IMR-90 (cell line): ENCODE measurements at regions of chr19 and their contacts with region 1.

Region 1: DNA sequence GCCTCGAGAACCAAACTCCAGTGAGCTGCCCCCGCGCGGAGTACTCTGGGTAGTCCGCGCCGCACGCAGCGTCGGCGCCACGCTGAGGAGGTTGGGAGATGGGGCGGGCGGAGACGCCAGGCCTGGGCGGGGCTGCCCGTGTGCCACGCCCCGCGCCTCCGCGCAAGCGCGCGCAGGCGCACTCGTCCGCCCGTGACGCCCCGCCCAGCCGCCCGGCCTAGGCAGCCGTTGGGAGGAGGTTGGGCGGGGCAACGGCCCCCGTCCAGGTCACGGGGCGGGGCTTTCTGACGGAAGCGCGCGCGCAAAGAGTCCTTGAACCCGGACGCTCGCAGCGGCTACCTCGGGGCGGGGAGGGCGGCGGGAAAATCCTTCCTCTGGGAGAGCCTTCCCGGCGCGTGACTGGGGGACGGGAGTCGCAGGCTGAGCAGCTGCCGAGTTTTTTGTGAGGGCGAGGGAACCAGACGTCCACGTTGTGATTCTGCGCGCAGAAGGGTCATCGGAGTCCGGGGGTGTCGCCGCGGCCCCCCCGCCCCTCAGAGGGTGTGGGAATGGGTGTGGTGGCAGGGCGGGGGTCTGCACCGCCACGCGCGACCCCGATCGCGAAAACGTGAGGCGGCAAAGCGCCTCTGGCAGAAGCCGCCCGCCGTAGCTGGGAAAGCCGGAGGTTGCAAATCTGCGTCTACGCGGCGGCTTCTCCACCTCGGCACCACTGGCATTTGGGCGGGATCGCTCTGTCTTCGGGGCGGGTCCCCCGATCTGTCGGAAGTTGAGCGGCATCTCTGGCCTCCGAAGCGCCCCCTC is at the start of gene MED26:
- DNase-seq: peak; percentile 90
- ATAC-seq: peak; percentile 91
- H3K4me3 ChIP-seq: peak within 1 kb of the TSS; percentile 95
- H3K27ac ChIP-seq: peak within 1 kb of the TSS; percentile 90
- H3K4me1 ChIP-seq: 0 out of 2 replicates have a peak, but pooled peaks cover 2% of the 10 kb centered on the region
- H3K27me3 ChIP-seq: no peaks in the 10 kb centered on the region
- CTCF ChIP-seq: no peak
- POLR2A ChIP-seq: peak; percentile 94
- RAD21 ChIP-seq: peak; percentile 28; the same call in 1 of the 2 replicates
- total RNA-seq, gene MED26: 2.0 and 2.8 TPM in 2 replicates

Region 2: GRCh38 chr19:16324384-16325160 is 303.8 kb before region 1 on chr19 and contains the start of gene KLF2:
- CTCF ChIA-PET with region 1: no interaction called
- POLR2A ChIA-PET with region 1: interaction called, 12 read pairs
- dilution Hi-C with region 1: no loop called
- in situ Hi-C with region 1: no loop called
- intact Hi-C with region 1: no loop called
- DNase-seq: peak; percentile 90
- ATAC-seq: peak; percentile 90
- H3K4me3 ChIP-seq: peak within 1 kb of the TSS; percentile 96
- H3K27ac ChIP-seq: peak within 1 kb of the TSS; percentile 91
- H3K4me1 ChIP-seq: peaks cover 19% of the 10 kb centered on the region
- H3K27me3 ChIP-seq: no peaks in the 10 kb centered on the region
- CTCF ChIP-seq: no peak
- POLR2A ChIP-seq: peak; percentile 99
- RAD21 ChIP-seq: no peak
- total RNA-seq, gene KLF2: 1.1 and 3.3 TPM in 2 replicates

Region 3: DNA sequence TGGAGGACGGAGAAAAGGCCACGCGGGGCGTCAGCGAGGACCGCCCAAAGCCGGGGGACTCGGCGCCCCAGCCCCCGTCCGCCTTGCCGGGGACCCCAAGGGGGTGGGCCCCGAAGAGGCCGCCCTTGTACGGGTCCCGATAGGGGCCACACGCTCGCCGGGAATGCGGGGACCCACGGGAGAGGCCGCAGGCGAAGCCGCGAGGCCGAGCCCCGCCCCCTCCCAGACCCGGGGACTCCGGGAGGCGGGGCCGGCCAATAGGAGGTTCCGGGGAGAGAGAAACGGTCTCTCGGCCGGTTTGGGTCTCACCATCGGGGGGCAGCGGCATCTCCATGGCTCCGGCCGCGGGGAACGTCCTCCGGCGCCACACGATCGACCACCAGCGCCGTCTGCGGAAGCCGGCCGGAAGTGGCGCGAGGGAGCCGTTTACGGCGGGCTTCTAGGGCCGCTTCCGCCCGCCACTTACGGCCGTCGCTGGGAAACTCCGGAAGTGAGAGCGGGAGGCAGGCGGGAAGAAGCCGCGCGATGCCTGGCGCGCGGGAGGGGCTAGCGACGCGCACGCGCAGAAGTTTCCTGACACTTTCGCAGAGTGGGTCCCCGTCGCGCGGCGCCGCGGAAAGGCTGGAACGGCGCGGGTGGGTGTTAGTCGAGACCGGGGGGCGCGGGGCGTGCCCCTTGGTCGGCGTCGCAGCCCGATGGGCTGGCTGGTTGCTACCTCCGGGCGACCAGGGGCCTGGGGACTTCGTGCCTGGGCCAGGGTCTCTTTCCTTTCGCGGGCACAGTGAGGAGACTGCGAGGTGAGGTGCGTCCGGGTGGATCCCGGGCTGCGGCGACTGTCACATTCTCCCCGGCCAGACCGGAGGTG is 86.1 kb before region 1 on chr19 and contains the start of gene CHERP:
- CTCF ChIA-PET with region 1: no interaction called
- POLR2A ChIA-PET with region 1: no interaction called
- dilution Hi-C with region 1: no loop called
- in situ Hi-C with region 1: no loop called
- intact Hi-C with region 1: loop called (anchors 2 kb)
- DNase-seq: peak; percentile 91
- ATAC-seq: peak; percentile 91
- H3K4me3 ChIP-seq: peak within 1 kb of the TSS; percentile 86
- H3K27ac ChIP-seq: peak within 1 kb of the TSS; percentile 77
- H3K4me1 ChIP-seq: peaks cover 2% of the 10 kb centered on the region
- H3K27me3 ChIP-seq: no peaks in the 10 kb centered on the region
- CTCF ChIP-seq: no peak
- POLR2A ChIP-seq: peak; percentile 68
- RAD21 ChIP-seq: no peak
- total RNA-seq, gene CHERP: 0.54 and 1.1 TPM in 2 replicates

Region 4: GRCh38 chr19:16572332-16573211 is 55.8 kb before region 1 on chr19 and contains the start of gene SLC35E1:
- CTCF ChIA-PET with region 1: no interaction called
- POLR2A ChIA-PET with region 1: no interaction called
- dilution Hi-C with region 1: no loop called
- in situ Hi-C with region 1: no loop called
- intact Hi-C with region 1: loop called (anchors 5 kb)
- DNase-seq: peak; percentile 94
- ATAC-seq: peak; percentile 93
- H3K4me3 ChIP-seq: peak within 1 kb of the TSS; percentile 78
- H3K27ac ChIP-seq: peak within 1 kb of the TSS; percentile 55
- H3K4me1 ChIP-seq: peaks cover 13% of the 10 kb centered on the region
- H3K27me3 ChIP-seq: no peaks in the 10 kb centered on the region
- CTCF ChIP-seq: no peak
- POLR2A ChIP-seq: peak; percentile 88
- RAD21 ChIP-seq: 0 out of 2 replicates have a peak, but pooled peaks have one; percentile 2
- total RNA-seq, gene SLC35E1: 22.6 and 25.8 TPM in 2 replicates

Region 5: GRCh38 chr19:16584248-16585141 is 43.9 kb before region 1 on chr19:
- CTCF ChIA-PET with region 1: no interaction called
- POLR2A ChIA-PET with region 1: interaction called, 3 read pairs
- dilution Hi-C with region 1: no loop called
- in situ Hi-C with region 1: loop called (anchors 5 kb)
- intact Hi-C with region 1: no loop called
- DNase-seq: peak; percentile 78
- ATAC-seq: peak; percentile 87
- H3K4me3 ChIP-seq: no peak overlapping the region
- H3K27ac ChIP-seq: no peak overlapping the region
- H3K4me1 ChIP-seq: peaks cover 38% of the 10 kb centered on the region
- H3K27me3 ChIP-seq: no peaks in the 10 kb centered on the region
- CTCF ChIP-seq: no peak
- POLR2A ChIP-seq: peak; percentile 69; the same call in 1 of the 2 replicates
- RAD21 ChIP-seq: no peak

Region 6: GRCh38 chr19:16661480-16662034 is 33.2 kb after region 1 on chr19:
- CTCF ChIA-PET with region 1: no interaction called
- POLR2A ChIA-PET with region 1: interaction called, 12 read pairs
- dilution Hi-C with region 1: no loop called
- in situ Hi-C with region 1: no loop called
- intact Hi-C with region 1: no loop called
- DNase-seq: no peak
- ATAC-seq: no peak
- H3K4me3 ChIP-seq: peak overlapping the region; percentile 52
- H3K27ac ChIP-seq: no peak overlapping the region; the same call in 1 of the 2 replicates
- H3K4me1 ChIP-seq: no peaks in the 10 kb centered on the region
- H3K27me3 ChIP-seq: no peaks in the 10 kb centered on the region
- CTCF ChIP-seq: no peak
- POLR2A ChIP-seq: no peak
- RAD21 ChIP-seq: no peak

Region 7: DNA sequence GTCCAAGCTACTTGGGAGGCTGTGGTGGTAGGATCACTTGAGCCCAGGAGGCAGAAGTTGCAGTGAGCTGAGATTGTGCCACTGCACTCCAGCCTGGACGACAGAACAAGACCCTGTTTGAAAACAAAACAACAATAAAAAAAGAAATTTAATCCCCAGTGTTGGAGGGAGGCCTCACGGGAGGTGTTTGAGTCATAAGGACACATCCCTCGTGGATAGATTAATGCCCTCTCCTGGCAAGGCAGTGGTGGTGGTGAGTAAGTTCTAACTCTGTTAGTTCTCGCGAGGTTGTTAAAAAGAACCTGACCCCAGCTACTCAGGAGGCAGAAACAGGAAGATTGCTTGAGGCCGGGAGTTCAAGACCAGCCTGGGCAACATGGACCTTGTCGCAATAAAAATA is 173.2 kb after region 1 on chr19:
- CTCF ChIA-PET with region 1: no interaction called
- POLR2A ChIA-PET with region 1: no interaction called
- dilution Hi-C with region 1: no loop called
- in situ Hi-C with region 1: no loop called
- intact Hi-C with region 1: no loop called
- DNase-seq: peak; percentile 71
- ATAC-seq: peak; percentile 64
- H3K4me3 ChIP-seq: no peak overlapping the region
- H3K27ac ChIP-seq: no peak overlapping the region
- H3K4me1 ChIP-seq: no peaks in the 10 kb centered on the region
- H3K27me3 ChIP-seq: peaks cover 3% of the 10 kb centered on the region; the same call in 1 of the 2 replicates
- CTCF ChIP-seq: no peak
- POLR2A ChIP-seq: no peak
- RAD21 ChIP-seq: no peak